Tibial artery (tissue), 4 donors: ENCODE measurements at regions of chr16 and their contacts with region 1.

Region 1: DNA sequence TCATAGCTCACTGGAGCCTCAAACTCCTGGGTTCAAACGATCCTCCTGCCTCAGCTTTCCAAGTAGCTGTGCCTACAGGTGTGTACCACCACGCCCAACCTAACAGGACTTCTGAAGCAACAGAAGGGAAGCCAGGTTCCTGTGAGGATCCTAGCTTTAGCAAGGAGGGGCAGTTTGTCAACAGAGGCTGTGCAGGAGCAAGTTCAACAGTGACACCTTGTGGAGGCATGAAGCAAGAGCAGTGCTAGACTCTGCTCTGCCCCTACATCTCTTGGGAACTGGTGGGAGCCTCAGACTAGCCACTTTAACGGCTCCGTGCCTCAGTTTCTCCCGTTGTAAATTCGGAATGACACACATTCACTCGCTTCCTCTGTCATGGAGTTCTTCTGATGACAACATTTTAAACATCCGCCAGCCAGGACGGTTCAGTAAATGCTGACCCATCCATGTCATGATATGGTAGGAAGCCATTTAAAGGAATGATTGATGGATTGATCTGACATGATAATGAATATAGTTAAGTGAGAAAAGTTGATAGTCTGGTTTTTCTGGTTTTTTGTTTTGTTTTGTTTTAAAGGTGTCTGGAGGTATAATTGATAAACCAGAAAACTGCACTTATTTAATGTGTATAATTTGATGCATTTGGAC is 218.7 kb downstream of the MRTFB start:
- DNase-seq: no peak
- H3K4me3 ChIP-seq: no peak overlapping the region
- H3K27ac ChIP-seq: peak overlapping the region in 1 of 2 donors; percentile 68
- H3K4me1 ChIP-seq: peaks cover 0 to 39% (median 17%) of the 10 kb centered on the region in 4 donors
- H3K27me3 ChIP-seq: no peaks in the 10 kb centered on the region
- CTCF ChIP-seq: no peak

Region 2: DNA sequence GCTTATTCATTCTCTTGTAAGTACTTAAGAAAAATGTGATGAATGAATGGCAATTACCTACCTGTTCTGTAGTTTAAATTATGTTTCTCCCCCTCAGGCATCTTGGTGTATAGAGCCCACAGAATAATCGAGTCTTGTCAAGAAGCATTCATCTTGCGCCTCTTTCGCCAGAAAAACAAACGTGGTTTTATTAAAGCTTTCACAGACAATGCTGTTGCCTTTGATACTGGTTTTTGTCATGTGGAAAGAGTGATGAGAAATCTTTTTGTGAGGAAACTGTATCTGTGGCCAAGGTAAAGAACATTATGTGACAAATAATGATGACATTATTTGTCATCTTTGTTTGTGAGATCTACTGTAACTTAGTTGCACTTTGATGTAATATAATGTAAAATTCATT is 363.4 kb before region 1 on chr16:
- intact Hi-C with region 1: loop called (anchors 5 kb)
- DNase-seq: no peak
- H3K4me3 ChIP-seq: no peak overlapping the region
- H3K27ac ChIP-seq: no peak overlapping the region
- H3K4me1 ChIP-seq: peaks cover 0 to 10% (median 6%) of the 10 kb centered on the region in 4 donors
- H3K27me3 ChIP-seq: no peaks in the 10 kb centered on the region
- CTCF ChIP-seq: no peak

Region 3: GRCh38 chr16:14249291-14250032 is 40.4 kb before region 1 on chr16:
- intact Hi-C with region 1: loop called (anchors 10 kb)
- DNase-seq: peak in 1 of 2 donors; percentile 48
- H3K4me3 ChIP-seq: no peak overlapping the region
- H3K27ac ChIP-seq: no peak overlapping the region
- H3K4me1 ChIP-seq: no peaks in the 10 kb centered on the region
- H3K27me3 ChIP-seq: no peaks in the 10 kb centered on the region
- CTCF ChIP-seq: peak; percentile 71 to 79

Region 4: GRCh38 chr16:14325502-14326401 is 35.9 kb after region 1 on chr16:
- intact Hi-C with region 1: no loop called
- DNase-seq: no peak
- H3K4me3 ChIP-seq: no peak overlapping the region
- H3K27ac ChIP-seq: peak overlapping the region in 1 of 2 donors; percentile 43
- H3K4me1 ChIP-seq: peaks cover 0 to 24% (median 9%) of the 10 kb centered on the region in 4 donors
- H3K27me3 ChIP-seq: no peaks in the 10 kb centered on the region
- CTCF ChIP-seq: no peak